H1 (cell line): ENCODE measurements at regions of chr19 and their contacts with region 1.

Region 1: GRCh38 chr19:16714702-16715287 is 4.9 kb upstream of the NWD1 start:
- DNase-seq: peak; percentile 50 to 92
- H3K4me3 ChIP-seq: no peak overlapping the region
- H3K27ac ChIP-seq: no peak overlapping the region
- H3K4me1 ChIP-seq: no peaks in the 10 kb centered on the region
- H3K27me3 ChIP-seq: no peaks in the 10 kb centered on the region
- CTCF ChIP-seq: peak; percentile 86 to 95 (median 90)
- EP300 ChIP-seq: no peak
- POLR2A ChIP-seq: no peak
- RAD21 ChIP-seq: peak; percentile 90 to 95

Region 2: GRCh38 chr19:16702118-16702517 is 12.7 kb before region 1 on chr19:
- CTCF ChIA-PET with region 1: interaction called, 10 read pairs
- POLR2A ChIA-PET with region 1: no interaction called
- DNase-seq: no peak
- H3K4me3 ChIP-seq: no peak overlapping the region
- H3K27ac ChIP-seq: no peak overlapping the region
- H3K4me1 ChIP-seq: no peaks in the 10 kb centered on the region
- H3K27me3 ChIP-seq: no peaks in the 10 kb centered on the region
- CTCF ChIP-seq: no peak
- EP300 ChIP-seq: no peak
- POLR2A ChIP-seq: no peak
- RAD21 ChIP-seq: no peak

Region 3: DNA sequence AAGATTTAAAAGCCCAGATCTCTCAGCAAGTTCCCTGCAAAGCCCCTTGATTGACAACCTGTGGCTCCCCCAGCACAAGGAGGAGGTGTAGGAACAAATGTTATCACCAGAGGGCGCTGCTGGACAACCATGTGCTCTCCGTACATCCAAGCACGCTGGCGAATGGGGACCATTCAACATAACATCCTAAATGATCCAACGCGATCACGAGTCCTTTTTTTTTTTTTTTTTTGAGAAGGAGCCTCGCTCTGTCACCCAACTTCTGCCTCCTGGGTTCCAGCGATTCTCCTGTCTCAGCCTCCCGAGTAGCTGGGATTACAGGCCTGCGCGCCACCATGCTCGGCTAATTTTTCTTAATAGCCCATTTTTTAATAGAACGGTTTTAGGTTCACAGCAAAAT is 56.8 kb after region 1 on chr19:
- CTCF ChIA-PET with region 1: interaction called, 19 read pairs
- POLR2A ChIA-PET with region 1: no interaction called
- DNase-seq: peak; percentile 79 to 94
- H3K4me3 ChIP-seq: no peak overlapping the region
- H3K27ac ChIP-seq: no peak overlapping the region
- H3K4me1 ChIP-seq: no peaks in the 10 kb centered on the region; a peak in 1 of 7 replicates
- H3K27me3 ChIP-seq: peaks cover 0 to 2% (median 0%) of the 10 kb centered on the region in 4 experiments; a peak in 1 of 7 replicates
- CTCF ChIP-seq: peak; percentile 75 to 89 (median 77)
- EP300 ChIP-seq: no peak
- POLR2A ChIP-seq: no peak
- RAD21 ChIP-seq: peak; percentile 87 to 93